ENCODE measurements at regions of chr2 and their contacts with region 1.

Region 1: GRCh38 chr2:230614913-230615332 is 97.7 kb upstream of the CAB39 start:
- DNase-seq: no peak
- H3K4me3 ChIP-seq: no peak overlapping the region
- H3K27ac ChIP-seq: no peak overlapping the region
- H3K4me1 ChIP-seq: no peaks in the 10 kb centered on the region
- H3K27me3 ChIP-seq: no peaks in the 10 kb centered on the region
- CTCF ChIP-seq: no peak

Region 2: DNA sequence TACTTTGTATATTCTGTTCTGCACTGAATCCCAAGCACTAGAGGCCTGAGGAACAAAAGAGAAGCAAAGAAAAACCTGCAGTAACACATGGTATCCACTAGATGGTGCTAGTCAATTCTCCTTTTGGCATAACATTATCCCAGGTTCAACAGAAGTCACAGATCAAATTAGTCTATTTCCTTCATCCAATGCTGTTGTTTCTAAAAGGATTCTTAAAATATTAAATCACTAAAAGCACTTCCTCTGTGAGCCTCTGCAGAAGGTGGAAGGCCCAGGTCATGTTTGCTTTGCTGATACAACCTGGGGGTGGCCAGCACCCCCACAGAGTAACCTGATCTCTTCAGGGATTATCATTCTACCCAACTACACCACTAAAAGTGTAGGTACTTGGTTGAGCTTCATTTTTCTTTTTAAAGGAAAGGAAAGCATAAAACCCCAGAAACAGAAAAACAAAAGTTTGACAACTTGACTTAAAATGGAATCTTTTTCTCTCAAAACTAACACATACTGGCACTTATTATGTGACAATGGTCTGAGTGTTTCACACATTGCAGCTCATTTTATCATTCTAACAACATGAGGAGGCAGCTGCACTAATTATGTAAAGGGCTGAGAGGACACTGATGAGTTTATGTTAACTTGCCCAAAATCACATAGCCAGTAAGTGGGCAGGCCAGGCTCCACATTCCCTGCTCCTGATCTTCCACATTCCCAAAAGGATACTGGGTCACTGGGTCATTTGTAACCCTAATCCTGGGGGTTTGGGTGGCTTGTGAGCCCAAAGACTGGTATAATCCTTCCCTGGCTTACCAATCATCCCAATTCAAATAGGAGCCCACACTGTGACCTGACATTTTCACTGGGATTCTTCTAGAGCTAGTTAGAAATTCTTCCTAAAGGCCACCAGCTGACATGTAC is 833.8 kb before region 1 on chr2:
- intact Hi-C with region 1: loop called (anchors 5 kb)
- DNase-seq: no peak
- H3K4me3 ChIP-seq: no peak overlapping the region
- H3K27ac ChIP-seq: peak overlapping the region in 1 of 2 donors; percentile 2
- H3K4me1 ChIP-seq: peaks cover 0 to 5% of the 10 kb centered on the region in 2 donors
- H3K27me3 ChIP-seq: no peaks in the 10 kb centered on the region
- CTCF ChIP-seq: peak; percentile 63 to 86 (median 73)

Region 3: GRCh38 chr2:229815858-229816257 is 799.1 kb before region 1 on chr2:
- intact Hi-C with region 1: no loop called
- DNase-seq: no peak
- H3K4me3 ChIP-seq: no peak overlapping the region
- H3K27ac ChIP-seq: no peak overlapping the region
- H3K4me1 ChIP-seq: peaks cover 0 to 3% of the 10 kb centered on the region in 2 donors
- H3K27me3 ChIP-seq: no peaks in the 10 kb centered on the region
- CTCF ChIP-seq: no peak

Region 4: GRCh38 chr2:230007931-230008707 is 606.8 kb before region 1 on chr2:
- intact Hi-C with region 1: loop called (anchors 5 kb)
- DNase-seq: peak in 1 of 2 donors; percentile 76
- H3K4me3 ChIP-seq: peak overlapping the region in 1 of 2 donors; percentile 10
- H3K27ac ChIP-seq: no peak overlapping the region
- H3K4me1 ChIP-seq: no peaks in the 10 kb centered on the region
- H3K27me3 ChIP-seq: no peaks in the 10 kb centered on the region
- CTCF ChIP-seq: peak; percentile 41 to 67 (median 64)

Region 5: GRCh38 chr2:230219419-230220331 is 395.2 kb before region 1 on chr2 and contains the start of gene SP110:
- intact Hi-C with region 1: loop called (anchors 10 kb)
- DNase-seq: peak; percentile 14 to 88
- H3K4me3 ChIP-seq: peak within 1 kb of the TSS; percentile 65 to 74
- H3K27ac ChIP-seq: peak within 1 kb of the TSS; percentile 69
- H3K4me1 ChIP-seq: peaks cover 5 to 16% of the 10 kb centered on the region in 2 donors
- H3K27me3 ChIP-seq: no peaks in the 10 kb centered on the region
- CTCF ChIP-seq: no peak
- total RNA-seq, gene SP110: 25.2 TPM